Right ventricle myocardium superior (tissue), 1 donor: ENCODE measurements at regions of chrX and their contacts with region 1.

Region 1: DNA sequence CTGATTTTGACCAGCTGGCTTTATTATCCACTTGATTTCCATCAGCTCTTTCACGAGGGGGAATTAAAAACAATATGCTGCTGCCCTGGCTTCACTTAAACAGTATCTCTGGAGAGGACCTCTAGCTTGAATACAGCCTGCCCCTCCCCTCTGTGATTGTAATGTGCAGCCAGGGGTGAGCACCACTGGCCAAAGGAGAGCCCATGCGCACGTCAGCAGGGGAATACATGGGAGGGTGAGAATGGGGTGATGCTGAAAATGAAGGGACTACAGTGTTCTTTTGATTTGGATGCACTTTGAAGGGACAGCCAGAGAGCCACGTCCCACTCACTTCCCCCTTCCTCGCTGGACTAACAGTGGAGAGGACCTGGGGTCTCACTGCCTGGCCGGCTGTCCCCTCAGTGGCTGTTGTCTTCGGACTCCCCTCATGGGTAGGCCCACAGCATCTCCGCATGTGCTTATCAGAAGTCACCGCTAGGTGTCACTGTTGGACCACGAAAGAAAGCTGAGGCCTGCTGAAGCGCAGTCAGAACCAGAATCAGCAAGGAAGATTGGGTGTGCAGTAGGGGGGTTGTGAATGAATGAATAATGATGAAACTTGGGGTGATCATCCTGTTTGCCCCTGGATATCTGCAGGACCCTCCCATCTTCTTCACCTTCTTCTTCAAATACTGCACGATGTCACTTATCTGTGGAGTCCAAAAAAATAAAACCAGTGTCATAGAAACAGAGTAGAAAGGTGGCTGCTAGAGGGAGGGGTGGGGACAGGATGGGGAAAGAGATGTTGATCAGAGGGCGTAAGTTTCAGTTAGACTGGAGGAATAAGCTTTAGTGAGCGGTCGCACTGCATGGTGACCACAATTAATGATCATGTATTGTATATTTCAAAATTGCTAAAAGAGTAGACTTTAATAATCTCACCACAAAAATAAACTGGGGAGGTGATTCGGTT is 32.8 kb downstream of the CLCN4 start:
- DNase-seq: peak; percentile 66
- ATAC-seq: peak; percentile 91

Region 2: GRCh38 chrX:10326578-10326977 is 137.0 kb after region 1 on chrX:
- intact Hi-C with region 1: loop called (anchors 10 kb)
- DNase-seq: peak; percentile 25
- ATAC-seq: peak; percentile 82

Region 3: DNA sequence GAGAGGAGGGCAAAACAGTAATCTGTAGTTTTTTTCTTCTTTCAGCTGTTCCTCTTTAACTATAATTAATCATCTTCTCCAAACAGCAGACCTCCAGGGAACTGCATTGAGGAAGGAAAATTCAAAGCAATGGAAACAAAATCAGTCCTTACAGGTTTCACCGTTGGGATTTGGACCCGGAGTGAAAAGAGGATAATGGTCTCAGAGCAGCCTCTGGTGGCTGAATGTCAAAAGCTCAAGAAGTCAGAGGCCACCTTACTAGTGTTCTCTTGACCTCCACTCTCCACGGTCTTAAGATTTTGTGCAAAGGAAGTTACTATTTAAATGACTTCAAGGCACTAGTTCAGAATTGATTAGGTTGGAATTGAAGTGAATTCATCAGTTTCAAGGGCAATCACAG is 446.7 kb after region 1 on chrX:
- intact Hi-C with region 1: loop called (anchors 10 kb)
- DNase-seq: no peak
- ATAC-seq: peak; percentile 80

Region 4: GRCh38 chrX:10722851-10723250 is 533.3 kb after region 1 on chrX:
- intact Hi-C with region 1: loop called (anchors 5 kb)
- DNase-seq: no peak
- ATAC-seq: peak; percentile 78